ENCODE measurements at regions of chr2 and their contacts with region 1.

Region 1: DNA sequence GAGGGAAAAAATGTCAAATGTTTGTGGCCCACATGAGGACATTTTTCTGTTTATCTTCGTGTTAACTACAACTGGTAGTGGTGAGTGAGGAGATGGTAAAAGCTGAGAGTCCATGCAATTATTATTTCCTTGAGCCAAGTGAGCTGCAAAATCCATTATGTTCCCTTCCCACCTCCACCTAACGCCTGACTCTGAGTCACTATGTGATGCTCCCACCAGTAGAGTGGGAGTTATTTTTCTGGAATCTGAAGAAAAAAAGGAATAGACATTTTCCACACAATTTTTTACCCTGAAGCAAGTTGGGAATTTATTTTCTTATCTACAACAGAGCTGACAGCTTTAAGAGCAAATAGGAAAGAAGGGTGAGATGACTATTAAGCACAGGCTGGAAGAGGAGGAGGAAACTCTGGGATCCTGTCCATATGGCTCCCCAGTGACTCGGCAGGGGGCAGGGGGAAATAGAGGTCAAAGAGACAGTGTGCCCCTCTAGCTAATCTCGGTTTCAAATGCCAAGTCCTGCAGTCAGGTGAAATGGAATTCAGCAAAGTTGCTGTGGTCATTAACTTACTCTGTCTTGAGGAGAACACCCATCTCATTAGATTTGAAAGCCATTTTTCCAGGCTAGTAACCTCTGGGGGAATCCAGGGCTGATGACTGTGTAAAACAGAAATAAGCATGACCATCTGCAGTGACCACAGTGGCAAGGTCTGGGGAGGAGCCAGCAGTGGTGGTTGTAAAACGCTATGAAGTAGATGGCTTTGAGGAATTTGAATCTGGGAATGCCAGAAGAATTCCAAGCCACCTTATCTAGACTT is 463.9 kb downstream of the STK39 start:
- DNase-seq: peak in 1 of 10 donors; percentile 16

Region 2: GRCh38 chr2:167420211-167420610 is 363.3 kb before region 1 on chr2:
- intact Hi-C with region 1: no loop called
- DNase-seq: no peak

Region 3: GRCh38 chr2:167729911-167730310 is 53.6 kb before region 1 on chr2:
- intact Hi-C with region 1: loop called (anchors 10 kb)
- DNase-seq: peak in 2 of 10 donors; percentile 11 to 65

Region 4: GRCh38 chr2:167875529-167875928 is 92.1 kb after region 1 on chr2:
- intact Hi-C with region 1: no loop called
- DNase-seq: no peak

Measured in posterior cingulate gyrus (tissue), 11 donors.